AG04449 (cell line): ENCODE measurements at regions of chr7 and their contacts with region 1.

Region 1: DNA sequence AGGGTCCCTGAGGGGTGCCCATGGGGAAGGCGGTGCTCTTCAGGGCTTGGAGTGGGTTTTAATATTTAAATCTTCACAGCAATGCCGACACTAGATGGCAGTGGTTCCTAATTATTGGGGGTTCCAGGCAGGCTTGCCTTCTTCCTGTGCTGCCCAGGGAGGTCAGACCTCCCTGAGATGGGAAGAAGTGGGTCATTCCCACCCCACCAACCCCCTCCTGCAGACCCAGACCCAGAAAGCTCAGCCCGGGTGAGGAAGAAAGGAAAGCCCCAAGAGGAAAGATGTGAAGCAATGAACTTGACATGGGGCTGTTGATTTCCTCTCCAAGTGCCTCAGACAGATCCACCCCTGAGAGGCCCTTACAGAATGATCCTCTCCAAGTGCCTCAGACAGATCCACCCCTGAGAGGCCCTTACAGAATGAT is 85.1 kb upstream of the LANCL2 start:
- DNase-seq: no peak
- H3K4me3 ChIP-seq: no peak overlapping the region
- CTCF ChIP-seq: peak; percentile 61

Region 2: GRCh38 chr7:55144333-55145317 is 135.4 kb before region 1 on chr7:
- CTCF ChIA-PET with region 1: no interaction called
- POLR2A ChIA-PET with region 1: no interaction called
- DNase-seq: no peak
- H3K4me3 ChIP-seq: no peak overlapping the region
- CTCF ChIP-seq: peak; percentile 33

Region 3: DNA sequence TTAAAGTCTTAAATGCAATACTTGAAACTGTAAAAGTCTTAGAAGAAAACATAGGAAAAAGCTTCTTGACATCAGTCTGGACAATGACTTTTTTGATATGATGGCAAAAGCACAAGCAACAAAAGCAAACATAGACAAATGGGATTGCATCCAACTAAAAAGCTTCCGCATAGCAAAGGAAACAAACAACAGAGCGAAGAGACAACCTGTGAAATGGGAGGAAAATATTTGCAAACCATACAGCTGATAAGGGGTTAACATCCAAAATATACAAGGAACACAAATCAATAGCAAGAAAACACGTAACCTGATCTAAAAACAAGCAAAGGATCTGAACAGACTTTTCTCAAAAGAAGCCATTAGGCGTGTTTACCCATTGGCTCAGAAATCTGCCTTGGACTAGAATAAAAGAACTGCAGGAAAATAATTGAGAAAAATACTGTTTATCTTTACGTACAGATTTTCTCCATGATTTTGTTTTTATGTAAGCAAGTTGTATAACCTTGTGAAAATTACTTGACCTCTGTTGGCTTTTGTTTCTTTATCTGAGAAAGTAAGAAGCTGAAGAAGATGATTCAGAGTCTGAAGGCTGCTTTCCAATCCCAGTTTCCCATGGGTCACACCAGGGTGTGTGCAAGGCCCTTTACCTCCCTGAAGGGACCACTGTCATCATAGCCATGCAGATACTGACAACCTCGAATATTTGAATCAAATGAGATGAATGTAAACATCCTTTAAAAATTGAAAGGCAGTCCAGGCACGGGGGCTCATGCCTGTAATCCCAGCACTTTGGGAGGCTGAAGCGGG is 14.0 kb before region 1 on chr7:
- CTCF ChIA-PET with region 1: interaction called, 18 read pairs
- POLR2A ChIA-PET with region 1: no interaction called
- DNase-seq: no peak
- H3K4me3 ChIP-seq: no peak overlapping the region
- CTCF ChIP-seq: no peak

Region 4: DNA sequence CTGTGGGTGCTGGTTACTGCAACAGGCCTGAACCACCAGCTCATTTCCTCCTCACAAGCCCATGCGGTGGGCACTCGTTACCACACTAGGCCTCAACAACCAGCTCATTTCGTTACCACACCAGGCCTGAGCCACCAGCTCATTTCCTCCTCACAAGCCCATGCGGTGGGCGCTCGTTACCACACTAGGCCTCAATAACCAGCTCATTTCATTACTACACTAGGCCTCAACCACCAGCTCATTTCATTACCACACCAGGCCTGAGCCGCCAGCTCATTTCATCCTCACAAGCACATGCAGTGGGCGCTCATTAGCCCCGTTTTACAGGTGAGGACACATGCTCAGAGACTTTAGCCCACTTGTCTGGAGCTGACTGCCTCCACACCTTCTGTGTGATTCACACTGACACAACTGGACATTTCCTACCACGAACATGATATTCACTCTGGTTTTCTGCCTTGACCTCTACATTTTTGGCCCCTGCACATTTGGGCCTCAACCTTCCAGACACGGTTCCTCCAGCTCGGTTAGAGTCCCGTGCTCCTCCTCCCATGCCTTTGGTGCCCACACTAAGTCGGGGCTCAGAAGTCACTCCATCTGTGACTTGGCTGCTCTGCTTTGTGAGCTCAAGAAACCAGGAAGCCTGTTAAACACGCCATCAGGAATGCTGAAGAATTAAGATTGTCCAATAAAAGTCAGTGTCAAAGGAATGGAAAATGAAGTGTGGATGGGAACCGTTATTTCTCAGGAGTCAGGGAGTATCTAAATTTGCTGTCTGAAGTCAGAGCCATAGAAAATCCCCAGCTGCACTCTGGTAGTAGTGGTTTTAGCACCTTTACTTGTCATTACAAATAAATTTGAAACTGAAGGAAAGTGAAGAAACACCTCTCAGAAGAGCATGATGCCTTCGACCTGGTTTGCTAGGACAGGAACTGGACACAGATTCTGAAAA is 29.3 kb after region 1 on chr7:
- CTCF ChIA-PET with region 1: interaction called, 31 read pairs
- POLR2A ChIA-PET with region 1: no interaction called
- DNase-seq: no peak
- H3K4me3 ChIP-seq: no peak overlapping the region
- CTCF ChIP-seq: no peak

Region 5: GRCh38 chr7:55400191-55400590 is 120.1 kb after region 1 on chr7:
- CTCF ChIA-PET with region 1: interaction called, 21 read pairs
- POLR2A ChIA-PET with region 1: no interaction called
- DNase-seq: no peak
- H3K4me3 ChIP-seq: no peak overlapping the region
- CTCF ChIP-seq: no peak

Region 6: GRCh38 chr7:55415173-55415778 is 135.2 kb after region 1 on chr7:
- CTCF ChIA-PET with region 1: interaction called, 248 read pairs
- POLR2A ChIA-PET with region 1: no interaction called
- DNase-seq: peak; percentile 23
- H3K4me3 ChIP-seq: no peak overlapping the region
- CTCF ChIP-seq: peak; percentile 71

Region 7: DNA sequence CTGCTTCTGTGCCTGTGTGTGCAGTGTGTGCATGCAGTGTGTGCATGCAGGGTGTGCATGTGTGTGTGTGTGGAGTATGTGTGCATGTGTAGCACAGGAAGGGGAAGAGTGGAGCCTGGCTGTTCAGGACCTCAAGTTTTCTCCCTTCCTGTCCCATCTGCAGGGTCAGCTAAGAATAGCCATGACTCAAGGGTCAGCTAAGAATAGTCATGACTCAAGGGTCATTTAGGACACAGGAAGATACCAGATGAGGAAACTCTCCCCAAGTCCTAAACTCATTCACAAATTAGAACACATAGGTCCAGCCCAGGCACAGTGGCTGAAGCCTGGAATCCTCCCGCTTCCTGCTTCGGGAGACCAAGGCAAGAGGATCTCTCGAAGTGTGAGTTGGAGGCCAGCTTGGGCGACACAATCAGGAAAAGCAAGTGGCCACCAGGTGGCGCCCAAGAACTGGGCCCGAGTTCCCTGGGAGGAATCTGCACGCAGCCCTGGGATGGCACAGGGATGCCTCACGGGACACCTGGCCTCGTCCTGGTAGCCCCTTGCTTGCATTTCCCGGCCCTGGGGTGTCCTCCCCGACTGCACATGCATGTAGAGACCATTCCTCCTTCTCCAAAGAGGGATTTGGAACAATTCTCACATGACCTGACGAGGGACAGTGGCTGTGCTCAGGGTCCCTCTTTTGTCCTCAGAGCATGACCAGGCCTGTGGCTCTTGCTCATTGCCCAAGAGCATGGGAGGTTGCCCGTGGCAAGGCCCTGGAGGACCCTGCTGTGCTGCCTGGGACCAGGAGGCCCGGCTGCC is 313.7 kb after region 1 on chr7:
- CTCF ChIA-PET with region 1: interaction called, 21 read pairs
- POLR2A ChIA-PET with region 1: no interaction called
- DNase-seq: no peak
- H3K4me3 ChIP-seq: no peak overlapping the region
- CTCF ChIP-seq: peak; percentile 83